Activated B cell treated with CpG ODN at 0.5 μM for 24 hours (primary cell): ENCODE measurements at regions of chr4 and their contacts with region 1.

Region 1: DNA sequence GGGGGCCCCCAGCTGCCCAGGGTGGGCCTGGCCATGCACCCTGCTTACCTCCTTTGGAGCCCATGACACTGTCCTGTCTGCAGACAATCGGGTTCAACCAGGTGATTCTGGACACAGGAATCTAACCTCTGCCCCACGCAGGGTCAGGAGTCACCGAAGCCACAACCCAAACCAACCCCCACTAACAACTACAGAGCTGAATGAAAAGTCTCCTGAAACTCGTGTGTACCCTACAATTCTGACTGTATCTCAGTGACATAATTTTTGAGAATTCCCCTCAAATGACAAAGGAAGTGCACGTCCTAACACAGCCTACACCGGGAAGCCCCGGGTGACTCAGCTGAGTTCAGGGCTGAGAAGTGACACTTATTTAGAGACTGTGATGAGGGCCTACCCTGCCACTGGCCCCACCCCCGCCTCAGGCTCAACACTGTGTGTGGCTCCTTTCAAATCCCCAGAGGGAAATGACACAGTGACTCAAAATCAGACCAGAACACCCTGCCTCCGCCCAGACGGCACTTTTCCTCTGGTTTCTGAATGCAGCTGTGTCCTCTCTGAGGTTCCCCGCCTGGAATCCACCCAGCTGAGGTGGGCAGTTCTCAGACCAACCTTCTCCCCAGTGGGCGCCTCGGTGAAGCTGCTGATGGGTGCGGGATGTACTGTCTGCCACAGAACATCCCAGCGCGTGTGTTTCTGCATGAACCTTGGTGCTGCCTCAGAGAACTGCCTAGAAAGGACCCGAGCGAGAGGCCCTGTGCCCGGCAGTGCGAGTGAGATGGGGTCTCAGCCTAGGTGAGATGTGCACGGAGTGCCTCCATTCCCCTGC is 9.9 kb downstream of the TNIP2 start:
- DNase-seq: peak; percentile 81
- ATAC-seq: peak; percentile 95
- H3K4me3 Mint-ChIP-seq: peak overlapping the region; percentile 68
- H3K27ac Mint-ChIP-seq: peak overlapping the region; percentile 94
- H3K4me1 Mint-ChIP-seq: peaks cover 55% of the 10 kb centered on the region
- H3K27me3 Mint-ChIP-seq: no peaks in the 10 kb centered on the region
- CTCF ChIP-seq: no peak

Region 2: GRCh38 chr4:2468445-2469192 is 277.6 kb before region 1 on chr4 and contains the start of gene RNF4:
- CTCF ChIA-PET with region 1: no interaction called
- POLR2A ChIA-PET with region 1: interaction called, 3 read pairs
- intact Hi-C with region 1: loop called (anchors 5 kb)
- DNase-seq: peak; percentile 83
- ATAC-seq: peak; percentile 87
- H3K4me3 Mint-ChIP-seq: peak within 1 kb of the TSS; percentile 96
- H3K27ac Mint-ChIP-seq: peak within 1 kb of the TSS; percentile 94
- H3K4me1 Mint-ChIP-seq: peaks cover 51% of the 10 kb centered on the region
- H3K27me3 Mint-ChIP-seq: no peaks in the 10 kb centered on the region
- CTCF ChIP-seq: no peak
- total RNA-seq, gene RNF4: 93.5 and 93.6 TPM in 2 replicates

Region 3: DNA sequence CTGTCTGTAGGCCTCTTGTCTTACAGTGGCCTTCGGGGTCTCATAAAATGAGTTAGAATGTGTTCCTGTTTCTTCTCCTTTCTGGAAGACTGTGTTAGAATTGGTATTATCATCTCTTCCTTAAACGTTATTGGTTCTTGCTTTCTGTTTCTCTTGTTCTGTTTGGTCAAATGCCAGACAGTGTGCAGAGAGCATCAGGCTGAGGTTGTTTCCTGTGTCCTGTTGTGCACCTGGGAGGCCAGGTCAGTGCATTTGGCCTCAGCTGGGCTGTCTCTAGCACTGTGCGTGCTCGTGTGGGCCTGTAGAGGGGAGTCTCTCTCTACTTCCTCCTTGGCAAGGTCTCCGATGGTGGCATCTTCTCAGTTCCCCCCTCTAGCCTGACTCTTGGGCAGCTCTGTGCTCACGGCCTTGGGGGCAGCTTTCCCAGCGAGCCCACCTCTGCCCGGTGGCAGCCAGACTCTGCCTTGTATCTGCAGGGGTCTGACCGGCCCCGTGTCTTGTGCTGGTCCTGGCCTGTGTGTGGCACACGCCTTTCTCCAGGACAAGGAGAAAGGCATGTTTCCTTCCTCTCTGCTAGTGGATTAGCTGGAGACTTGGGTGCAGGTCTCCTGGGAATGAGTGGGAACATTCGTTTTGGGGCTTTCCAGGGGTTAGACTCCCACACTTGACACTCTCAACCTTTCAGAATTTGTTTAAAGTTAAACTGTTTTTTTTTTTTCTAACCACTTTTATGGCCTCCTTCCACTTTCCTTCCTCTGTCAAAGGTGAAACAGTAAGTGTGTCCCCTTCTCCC is 147.5 kb before region 1 on chr4:
- CTCF ChIA-PET with region 1: no interaction called
- POLR2A ChIA-PET with region 1: interaction called, 4 read pairs
- intact Hi-C with region 1: loop called (anchors 5 kb)
- DNase-seq: peak; percentile 41
- ATAC-seq: peak; percentile 98
- H3K4me3 Mint-ChIP-seq: peak overlapping the region; percentile 67
- H3K27ac Mint-ChIP-seq: peak overlapping the region; percentile 85
- H3K4me1 Mint-ChIP-seq: peaks cover 68% of the 10 kb centered on the region
- H3K27me3 Mint-ChIP-seq: no peaks in the 10 kb centered on the region
- CTCF ChIP-seq: no peak

Region 4: GRCh38 chr4:2714061-2714770 is 32.0 kb before region 1 on chr4:
- CTCF ChIA-PET with region 1: no interaction called
- POLR2A ChIA-PET with region 1: no interaction called
- intact Hi-C with region 1: loop called (anchors 5 kb)
- DNase-seq: no peak
- ATAC-seq: no peak
- H3K4me3 Mint-ChIP-seq: no peak overlapping the region
- H3K27ac Mint-ChIP-seq: no peak overlapping the region
- H3K4me1 Mint-ChIP-seq: peaks cover 23% of the 10 kb centered on the region
- H3K27me3 Mint-ChIP-seq: no peaks in the 10 kb centered on the region
- CTCF ChIP-seq: no peak

Region 5: DNA sequence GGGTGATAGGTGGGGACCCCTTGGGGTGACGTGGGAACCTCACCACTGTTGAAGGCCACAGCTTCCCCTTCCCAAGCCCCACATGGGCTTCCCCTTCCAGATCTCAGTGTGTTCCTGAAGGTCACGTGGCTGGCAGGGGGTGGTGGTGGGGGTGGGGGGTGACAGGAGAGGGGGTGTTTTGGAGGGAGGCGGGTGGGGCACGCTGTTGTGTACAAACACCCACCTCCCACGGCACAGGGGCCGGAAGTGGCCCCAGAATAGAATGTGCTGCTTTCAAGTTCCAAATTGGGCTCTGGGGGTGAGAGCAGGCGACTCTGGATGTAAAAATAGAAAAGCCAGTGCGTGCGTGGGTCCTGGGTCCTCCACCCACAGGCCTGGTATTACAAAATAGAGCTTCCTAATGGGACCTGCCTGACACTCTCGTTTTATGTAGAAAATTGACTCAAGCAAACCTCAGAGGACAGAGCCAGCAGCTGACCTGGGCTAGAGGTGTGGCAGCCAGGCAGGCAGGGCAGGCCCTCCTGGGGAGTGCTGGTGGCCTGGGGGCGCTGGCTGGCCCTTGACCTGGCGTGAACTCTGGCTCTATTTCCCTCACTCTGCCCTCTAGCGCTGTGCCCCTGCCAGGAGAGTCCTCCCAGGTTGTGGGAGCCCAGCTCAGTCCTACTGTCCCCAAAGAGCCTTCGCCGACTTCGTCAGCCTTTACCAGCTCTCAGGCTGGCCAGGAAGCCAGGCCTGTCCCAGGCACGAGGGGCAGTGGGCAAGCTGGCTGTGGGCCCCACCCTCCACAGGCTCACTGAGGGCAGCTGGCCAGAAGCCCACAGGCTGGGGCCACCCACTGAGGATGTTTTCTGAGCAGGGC is 41.3 kb after region 1 on chr4:
- CTCF ChIA-PET with region 1: no interaction called
- POLR2A ChIA-PET with region 1: interaction called, 27 read pairs
- intact Hi-C with region 1: loop called (anchors 1 kb)
- DNase-seq: peak; percentile 56
- ATAC-seq: peak; percentile 50
- H3K4me3 Mint-ChIP-seq: peak overlapping the region; percentile 41
- H3K27ac Mint-ChIP-seq: peak overlapping the region; percentile 93
- H3K4me1 Mint-ChIP-seq: peaks cover 72% of the 10 kb centered on the region
- H3K27me3 Mint-ChIP-seq: no peaks in the 10 kb centered on the region
- CTCF ChIP-seq: no peak

Region 6: DNA sequence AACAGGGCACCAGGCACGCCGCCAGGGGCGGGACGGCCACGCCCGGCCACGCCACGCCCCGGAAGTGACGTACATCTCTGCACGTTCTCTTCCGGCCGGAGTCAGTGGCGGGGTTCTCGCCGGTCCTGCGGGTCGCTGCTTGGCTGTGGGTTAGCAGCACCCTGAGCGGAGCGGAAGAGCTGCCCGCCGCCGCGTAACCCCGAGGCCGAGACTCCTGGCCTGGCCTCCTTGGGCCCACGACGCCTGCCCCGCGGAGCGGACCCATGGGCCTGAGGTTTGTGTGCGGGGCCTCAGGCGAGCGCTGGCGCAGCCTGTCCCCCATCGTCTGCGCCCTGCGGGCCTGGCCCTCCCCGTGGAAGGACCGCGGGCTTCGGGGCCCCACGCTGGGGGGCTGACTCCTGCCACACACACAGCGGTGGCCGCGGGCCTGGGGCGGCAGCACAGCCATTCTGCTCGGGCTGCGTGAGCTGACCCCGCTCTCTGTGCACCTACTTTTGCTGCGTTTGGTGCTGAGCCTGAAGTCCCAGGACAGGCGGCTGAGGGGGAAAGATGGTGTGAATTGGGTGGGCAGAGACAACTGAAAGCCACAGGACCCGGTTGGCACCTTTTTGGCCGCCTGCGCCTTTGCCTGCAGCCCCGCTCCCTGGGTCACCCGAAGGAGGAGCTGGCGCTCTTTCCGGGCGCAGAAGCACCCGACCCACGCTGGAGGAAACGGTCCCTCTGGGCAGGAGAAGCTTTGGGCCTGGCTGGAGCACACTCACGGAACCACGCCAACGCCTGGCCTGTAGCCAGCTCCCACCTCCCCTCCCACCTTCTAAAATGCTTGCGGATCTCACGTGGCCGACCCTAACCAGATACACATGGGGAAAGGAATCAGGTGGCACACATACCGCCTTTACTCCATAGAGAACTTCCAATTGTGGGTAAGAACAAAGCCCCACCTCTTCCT is 188.9 kb after region 1 on chr4:
- CTCF ChIA-PET with region 1: no interaction called
- POLR2A ChIA-PET with region 1: interaction called, 8 read pairs
- intact Hi-C with region 1: loop called (anchors 1 kb)
- DNase-seq: peak; percentile 99
- ATAC-seq: peak; percentile 46
- H3K4me3 Mint-ChIP-seq: peak overlapping the region; percentile 83
- H3K27ac Mint-ChIP-seq: peak overlapping the region; percentile 59
- H3K4me1 Mint-ChIP-seq: peaks cover 66% of the 10 kb centered on the region
- H3K27me3 Mint-ChIP-seq: no peaks in the 10 kb centered on the region
- CTCF ChIP-seq: no peak